Heart left ventricle (tissue), 16 donors: ENCODE measurements at regions of chr3 and their contacts with region 1.

Region 1: GRCh38 chr3:149657926-149658733 is at the start of gene WWTR1:
- DNase-seq: peak; percentile 93 to 97 (median 96)
- ATAC-seq: peak; percentile 87 to 95 (median 90)
- H3K4me3 ChIP-seq: peak within 1 kb of the TSS; percentile 49 to 94 (median 78)
- H3K27ac ChIP-seq: peak within 1 kb of the TSS; percentile 89 to 100 (median 98)
- H3K4me1 ChIP-seq: peaks cover 0 to 46% (median 30%) of the 10 kb centered on the region in 12 donors
- H3K27me3 ChIP-seq: peaks cover 0 to 36% (median 0%) of the 10 kb centered on the region in 9 donors
- CTCF ChIP-seq: peak in 9 of 12 donors; percentile 8 to 60 (median 39)
- POLR2A ChIP-seq: peak; percentile 56 to 99
- total RNA-seq, gene WWTR1: 32.5 to 71.7 (median 41.2) TPM

Region 2: DNA sequence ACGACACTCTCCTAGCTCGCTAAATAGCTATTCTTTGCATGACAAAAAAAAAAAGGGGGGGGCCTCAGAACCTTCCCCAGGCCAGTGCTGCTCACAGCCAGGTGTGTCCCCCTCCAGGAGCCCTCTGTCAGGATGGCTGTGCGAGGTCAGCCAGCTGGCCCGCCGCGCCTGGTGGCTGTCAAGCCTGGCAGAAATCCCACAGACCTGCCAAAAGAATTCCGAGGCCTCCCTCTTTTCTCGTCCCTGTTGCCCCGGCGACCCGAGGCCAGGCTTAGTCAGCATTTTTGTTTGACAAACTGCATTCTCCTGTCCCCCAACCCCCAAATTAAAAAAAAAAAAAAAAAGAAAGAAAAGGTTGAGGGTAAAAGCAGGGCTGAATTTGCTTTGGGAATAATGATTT is 121.7 kb before region 1 on chr3:
- intact Hi-C with region 1: loop called in 6 of 10 experiments (anchors 5 to 10 kb)
- DNase-seq: peak; percentile 75 to 86 (median 80)
- ATAC-seq: peak; percentile 82 to 85 (median 84)
- H3K4me3 ChIP-seq: no peak overlapping the region
- H3K27ac ChIP-seq: peak overlapping the region in 5 of 12 donors; percentile 7 to 63 (median 20)
- H3K4me1 ChIP-seq: peaks cover 0 to 73% (median 43%) of the 10 kb centered on the region in 12 donors
- H3K27me3 ChIP-seq: no peaks in the 10 kb centered on the region
- CTCF ChIP-seq: no peak
- POLR2A ChIP-seq: no peak

Region 3: DNA sequence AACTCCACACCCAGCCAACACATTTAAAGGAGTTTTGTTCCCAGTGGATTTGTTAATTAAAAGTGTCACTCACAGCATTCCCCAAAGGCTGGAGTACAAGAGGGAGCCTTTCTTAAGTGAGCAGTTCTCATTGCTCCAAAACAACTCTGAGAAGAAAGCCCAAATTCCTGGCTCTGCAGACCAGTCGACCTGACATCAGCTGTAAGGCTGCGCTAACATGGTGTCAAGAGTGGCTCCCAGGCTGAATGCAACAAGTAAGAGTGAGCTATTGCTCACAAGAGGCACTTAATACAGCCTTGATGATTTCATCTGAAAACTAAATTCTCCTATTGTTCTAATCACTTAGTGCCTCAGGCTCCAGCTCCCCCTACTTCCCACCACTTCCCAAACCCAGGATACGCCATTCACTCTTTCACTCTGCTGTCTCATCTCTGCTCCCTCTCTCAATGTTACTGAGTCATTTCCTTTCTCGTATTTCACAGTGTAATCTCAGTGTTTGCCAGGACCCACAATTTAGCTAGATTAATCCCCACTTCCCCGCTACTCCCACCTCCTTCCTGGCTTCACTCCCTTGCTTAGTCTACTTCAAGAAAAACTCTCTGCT is 82.1 kb before region 1 on chr3:
- intact Hi-C with region 1: loop called in 8 of 10 experiments (anchors 5 to 10 kb)
- DNase-seq: peak in 3 of 5 donors; percentile 37 to 57 (median 51)
- ATAC-seq: peak; percentile 45 to 90 (median 84)
- H3K4me3 ChIP-seq: peak overlapping the region in 4 of 12 donors; percentile 11 to 29 (median 14)
- H3K27ac ChIP-seq: peak overlapping the region; percentile 42 to 91 (median 78)
- H3K4me1 ChIP-seq: peaks cover 5 to 99% (median 87%) of the 10 kb centered on the region in 12 donors
- H3K27me3 ChIP-seq: no peaks in the 10 kb centered on the region
- CTCF ChIP-seq: no peak
- POLR2A ChIP-seq: peak in 1 of 2 donors; percentile 10

Region 4: DNA sequence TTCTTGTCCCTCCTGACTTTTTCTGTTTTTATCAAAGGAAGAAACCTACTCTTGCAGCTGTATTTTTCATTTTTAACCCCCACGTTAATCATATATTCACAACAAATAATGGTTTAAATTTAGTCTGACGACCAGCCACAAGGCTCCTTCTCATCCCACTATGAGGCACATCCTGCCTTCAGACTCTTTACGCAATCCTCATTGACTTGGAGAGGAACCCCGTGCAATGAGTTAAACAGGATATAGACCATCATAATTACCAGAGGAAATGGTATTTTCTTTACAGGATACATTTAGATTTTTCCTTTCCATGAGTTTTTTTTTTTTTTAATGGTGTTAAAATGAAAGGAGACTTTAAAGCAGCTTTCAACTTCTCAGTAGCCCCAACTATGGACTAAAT is 68.8 kb before region 1 on chr3:
- intact Hi-C with region 1: loop called in 2 of 10 experiments (anchors 2 to 5 kb)
- DNase-seq: no peak
- ATAC-seq: peak in 1 of 4 donors; percentile 64
- H3K4me3 ChIP-seq: no peak overlapping the region
- H3K27ac ChIP-seq: peak overlapping the region in 10 of 12 donors; percentile 33 to 84 (median 64)
- H3K4me1 ChIP-seq: peaks cover 0 to 87% (median 60%) of the 10 kb centered on the region in 12 donors
- H3K27me3 ChIP-seq: no peaks in the 10 kb centered on the region
- CTCF ChIP-seq: no peak
- POLR2A ChIP-seq: no peak

Region 5: DNA sequence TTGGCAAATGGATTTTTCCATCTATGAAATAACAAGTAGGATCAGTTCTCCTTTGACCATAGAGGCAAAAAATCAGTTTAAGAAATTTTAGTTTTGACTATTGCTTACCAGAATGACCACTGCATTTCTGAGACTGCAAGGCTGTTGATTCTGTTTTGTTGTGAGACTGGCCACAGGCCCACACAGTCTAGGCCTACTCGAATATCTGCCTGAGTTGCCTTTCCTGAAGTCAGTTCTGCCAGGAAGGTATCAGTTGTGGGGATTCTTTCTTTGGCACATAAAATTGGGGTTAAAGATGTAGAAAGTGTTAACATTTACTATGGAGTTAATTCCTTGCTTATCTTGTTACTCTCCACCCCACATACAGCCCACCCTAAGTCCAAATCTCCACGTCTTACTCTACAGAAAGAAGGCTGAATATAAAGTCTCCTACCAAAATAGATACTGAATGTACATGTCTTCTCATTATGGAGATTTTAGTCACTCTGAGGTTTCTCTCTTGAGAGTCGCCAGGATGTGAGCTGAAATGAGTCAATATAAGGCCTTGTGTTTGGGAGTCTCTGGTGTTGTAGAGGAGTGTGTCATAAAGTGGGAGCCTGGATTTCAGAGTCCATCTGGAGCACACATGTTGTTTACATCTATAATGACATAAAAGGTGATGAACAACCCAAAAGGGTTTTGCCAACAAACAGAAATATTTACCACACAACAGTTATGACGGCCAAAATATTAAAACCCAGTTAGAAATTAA is 44.7 kb after region 1 on chr3:
- intact Hi-C with region 1: loop called in 2 of 10 experiments (anchors 5 kb)
- DNase-seq: no peak
- ATAC-seq: peak; percentile 22 to 91 (median 59)
- H3K4me3 ChIP-seq: no peak overlapping the region
- H3K27ac ChIP-seq: peak overlapping the region in 9 of 12 donors; percentile 5 to 73 (median 42)
- H3K4me1 ChIP-seq: peaks cover 0 to 9% (median 0%) of the 10 kb centered on the region in 12 donors
- H3K27me3 ChIP-seq: no peaks in the 10 kb centered on the region
- CTCF ChIP-seq: no peak
- POLR2A ChIP-seq: no peak

Region 6: GRCh38 chr3:149752051-149752787 is 94.1 kb after region 1 on chr3 and contains the start of gene COMMD2:
- intact Hi-C with region 1: loop called in 1 of 10 experiments (anchors 2 kb)
- DNase-seq: peak; percentile 67 to 84 (median 82)
- ATAC-seq: peak; percentile 91 to 99 (median 99)
- H3K4me3 ChIP-seq: peak within 1 kb of the TSS; percentile 65 to 94 (median 82)
- H3K27ac ChIP-seq: peak within 1 kb of the TSS in 11 of 12 donors; percentile 51 to 86 (median 71)
- H3K4me1 ChIP-seq: peaks cover 0 to 19% (median 9%) of the 10 kb centered on the region in 12 donors
- H3K27me3 ChIP-seq: no peaks in the 10 kb centered on the region
- CTCF ChIP-seq: peak in 11 of 12 donors; percentile 9 to 52 (median 35)
- POLR2A ChIP-seq: peak in 1 of 2 donors; percentile 53
- total RNA-seq, gene COMMD2: 9.9 to 25.8 (median 18.1) TPM